HepG2 (cell line): ENCODE measurements at regions of chr2 and their contacts with region 1.

Region 1: GRCh38 chr2:63861220-63861822 is 19.6 kb downstream of the UGP2 start:
- DNase-seq: peak; percentile 54
- ATAC-seq: peak; percentile 60
- H3K4me3 ChIP-seq: no peak overlapping the region
- H3K27ac ChIP-seq: no peak overlapping the region
- H3K4me1 ChIP-seq: peaks cover 23% of the 10 kb centered on the region
- H3K27me3 ChIP-seq: no peaks in the 10 kb centered on the region
- CTCF ChIP-seq: peak; percentile 55
- EP300 ChIP-seq: no peak
- POLR2A ChIP-seq: no peak
- RAD21 ChIP-seq: peak; percentile 81

Region 2: DNA sequence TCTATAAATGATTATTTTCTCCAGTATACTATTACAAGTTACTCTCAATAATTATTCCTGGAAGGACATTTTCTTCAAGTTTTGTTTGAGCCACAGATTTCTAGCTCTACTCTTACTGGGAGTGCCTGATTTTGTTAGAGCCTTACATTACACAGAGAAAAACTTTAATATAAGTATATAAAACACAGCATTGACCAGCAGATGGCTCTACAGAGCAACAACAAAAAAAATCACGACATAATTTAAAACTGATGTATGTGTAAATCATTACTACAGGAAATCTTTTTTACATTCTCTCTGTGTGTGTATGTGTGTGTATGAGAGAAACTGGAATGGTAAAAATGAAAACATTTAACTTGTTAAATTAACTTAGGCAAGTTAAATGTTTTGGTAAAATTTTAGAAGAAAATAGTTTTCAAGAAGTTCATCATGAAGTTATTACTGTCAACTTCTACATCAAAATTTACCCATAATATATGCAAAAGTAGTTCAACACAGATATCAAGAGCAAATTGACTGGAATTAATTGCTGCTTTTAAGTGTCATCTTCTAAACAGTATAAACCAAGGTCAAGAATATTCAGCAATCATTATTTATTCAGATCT is 169.2 kb before region 1 on chr2:
- CTCF ChIA-PET with region 1: interaction called, 45 read pairs
- POLR2A ChIA-PET with region 1: no interaction called
- in situ Hi-C with region 1: no loop called
- intact Hi-C with region 1: loop called (anchors 1 kb)
- DNase-seq: peak; percentile 41
- ATAC-seq: peak; percentile 54
- H3K4me3 ChIP-seq: no peak overlapping the region
- H3K27ac ChIP-seq: no peak overlapping the region
- H3K4me1 ChIP-seq: no peaks in the 10 kb centered on the region
- H3K27me3 ChIP-seq: no peaks in the 10 kb centered on the region
- CTCF ChIP-seq: peak; percentile 60
- EP300 ChIP-seq: no peak
- POLR2A ChIP-seq: no peak
- RAD21 ChIP-seq: peak; percentile 54; the same call in 1 of the 2 replicates

Region 3: DNA sequence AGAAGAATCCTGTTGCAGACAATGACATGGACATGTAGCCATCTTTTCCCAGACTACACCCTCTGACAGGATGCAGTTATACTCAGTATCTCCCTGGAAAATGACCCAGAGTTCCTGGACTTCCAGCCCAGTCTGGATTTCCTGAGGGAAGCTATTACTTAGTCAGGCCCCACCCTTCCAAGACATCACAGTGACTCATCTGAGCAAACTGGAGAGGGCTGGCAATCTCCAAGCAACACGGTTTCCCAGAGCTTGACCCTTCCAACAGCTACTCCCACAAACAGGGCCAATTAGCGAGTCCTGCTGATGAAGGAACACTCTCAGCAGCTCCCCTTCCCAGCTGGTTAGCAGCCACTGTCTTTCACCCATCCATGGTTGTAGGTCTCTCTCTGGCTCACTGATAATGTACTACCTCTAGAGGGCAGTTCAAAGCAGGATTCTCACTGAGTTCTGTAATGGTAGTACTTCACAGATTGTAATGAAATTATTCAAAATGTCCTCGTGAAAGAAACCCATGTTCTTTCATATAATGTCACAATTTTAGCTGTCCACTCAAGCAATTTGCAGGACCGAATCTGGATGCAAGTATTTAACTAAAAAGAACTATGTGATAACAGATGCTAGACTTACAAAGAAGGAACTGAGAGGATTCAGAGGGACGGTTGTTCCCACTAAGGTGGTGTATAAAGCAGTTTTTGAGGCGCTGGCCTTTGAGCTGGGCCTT is 162.3 kb before region 1 on chr2:
- CTCF ChIA-PET with region 1: interaction called, 17 read pairs
- POLR2A ChIA-PET with region 1: interaction called, 4 read pairs
- in situ Hi-C with region 1: no loop called
- intact Hi-C with region 1: loop called (anchors 1 kb)
- DNase-seq: peak; percentile 72
- ATAC-seq: peak; percentile 100
- H3K4me3 ChIP-seq: no peak overlapping the region
- H3K27ac ChIP-seq: no peak overlapping the region
- H3K4me1 ChIP-seq: peaks cover 21% of the 10 kb centered on the region
- H3K27me3 ChIP-seq: no peaks in the 10 kb centered on the region
- CTCF ChIP-seq: peak; percentile 91
- EP300 ChIP-seq: no peak
- POLR2A ChIP-seq: no peak
- RAD21 ChIP-seq: peak; percentile 87

Region 4: GRCh38 chr2:63780483-63781155 is 80.7 kb before region 1 on chr2:
- CTCF ChIA-PET with region 1: no interaction called
- POLR2A ChIA-PET with region 1: no interaction called
- in situ Hi-C with region 1: no loop called
- intact Hi-C with region 1: no loop called
- DNase-seq: no peak
- ATAC-seq: no peak
- H3K4me3 ChIP-seq: no peak overlapping the region
- H3K27ac ChIP-seq: no peak overlapping the region
- H3K4me1 ChIP-seq: peaks cover 13% of the 10 kb centered on the region; the same call in 1 of the 2 replicates
- H3K27me3 ChIP-seq: no peaks in the 10 kb centered on the region
- CTCF ChIP-seq: 0 out of 2 replicates have a peak, but pooled peaks have one; percentile 10
- EP300 ChIP-seq: no peak
- POLR2A ChIP-seq: no peak
- RAD21 ChIP-seq: no peak

Region 5: GRCh38 chr2:63888490-63889402 is 27.4 kb after region 1 on chr2:
- CTCF ChIA-PET with region 1: no interaction called
- POLR2A ChIA-PET with region 1: no interaction called
- in situ Hi-C with region 1: no loop called
- intact Hi-C with region 1: loop called (anchors 2 kb)
- DNase-seq: peak; percentile 65
- ATAC-seq: peak; percentile 89
- H3K4me3 ChIP-seq: no peak overlapping the region
- H3K27ac ChIP-seq: no peak overlapping the region
- H3K4me1 ChIP-seq: peaks cover 14% of the 10 kb centered on the region
- H3K27me3 ChIP-seq: no peaks in the 10 kb centered on the region
- CTCF ChIP-seq: peak; percentile 87
- EP300 ChIP-seq: no peak
- POLR2A ChIP-seq: no peak; a peak in 1 of 4 replicates
- RAD21 ChIP-seq: peak; percentile 80